B cell (primary cell): ENCODE measurements at regions of chr5 and their contacts with region 1.

Region 1: GRCh38 chr5:128083033-128083810 is at the start of gene SLC12A2:
- DNase-seq: peak; percentile 98
- ATAC-seq: peak; percentile 71
- H3K4me3 ChIP-seq: peak within 1 kb of the TSS; percentile 79 to 89 (median 85)
- H3K4me3 Mint-ChIP-seq: peak within 1 kb of the TSS; percentile 95
- H3K27ac ChIP-seq: peak within 1 kb of the TSS; percentile 85 to 91
- H3K27ac Mint-ChIP-seq: peak within 1 kb of the TSS; percentile 95
- H3K4me1 ChIP-seq: peaks cover 42 to 49% of the 10 kb centered on the region in 2 donors
- H3K4me1 Mint-ChIP-seq: peaks cover 71% of the 10 kb centered on the region
- H3K27me3 ChIP-seq: no peaks in the 10 kb centered on the region
- H3K27me3 Mint-ChIP-seq: no peaks in the 10 kb centered on the region
- CTCF ChIP-seq: no peak
- total RNA-seq, gene SLC12A2: 27.4 and 28.7 TPM in 2 replicates

Region 2: DNA sequence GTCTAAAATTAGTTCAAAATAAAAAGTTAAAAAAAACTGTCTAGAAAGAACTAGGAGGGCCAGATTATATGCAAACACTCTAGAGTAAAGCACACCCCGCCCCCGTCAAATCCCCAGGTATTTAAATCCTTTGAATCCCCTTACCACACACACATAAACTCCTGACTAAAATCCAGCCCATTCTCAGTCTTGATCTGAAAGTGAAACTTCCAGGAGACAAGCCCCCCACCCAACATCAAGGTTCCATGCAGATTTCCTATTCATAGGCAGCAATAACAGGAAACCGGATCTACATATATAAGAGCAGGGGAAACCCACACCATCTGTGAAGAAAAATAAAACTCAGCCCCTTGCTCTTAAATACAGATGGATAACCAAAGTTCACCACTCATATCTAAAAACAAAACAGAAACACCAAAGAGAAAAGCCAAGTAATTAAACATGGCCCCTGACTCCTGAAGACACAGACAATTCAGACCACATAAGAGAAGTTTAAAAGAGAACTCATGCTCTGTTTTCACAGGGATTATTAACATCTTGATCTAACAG is 1095.1 kb before region 1 on chr5:
- CTCF ChIA-PET with region 1: no interaction called
- POLR2A ChIA-PET with region 1: no interaction called
- intact Hi-C with region 1: loop called (anchors 2 kb)
- DNase-seq: peak; percentile 85
- ATAC-seq: peak; percentile 87
- H3K4me3 ChIP-seq: peak overlapping the region; percentile 27 to 52 (median 42)
- H3K4me3 Mint-ChIP-seq: peak overlapping the region; percentile 88
- H3K27ac ChIP-seq: peak overlapping the region; percentile 91 to 94
- H3K27ac Mint-ChIP-seq: peak overlapping the region; percentile 97
- H3K4me1 ChIP-seq: peaks cover 71% of the 10 kb centered on the region in 2 donors
- H3K4me1 Mint-ChIP-seq: peaks cover 80% of the 10 kb centered on the region
- H3K27me3 ChIP-seq: no peaks in the 10 kb centered on the region
- H3K27me3 Mint-ChIP-seq: no peaks in the 10 kb centered on the region
- CTCF ChIP-seq: no peak

Region 3: GRCh38 chr5:127517480-127518318 is 565.5 kb before region 1 on chr5 and contains the start of gene PRRC1:
- CTCF ChIA-PET with region 1: no interaction called
- POLR2A ChIA-PET with region 1: no interaction called
- intact Hi-C with region 1: loop called (anchors 2 kb)
- DNase-seq: peak; percentile 86
- ATAC-seq: peak; percentile 96
- H3K4me3 ChIP-seq: peak within 1 kb of the TSS; percentile 85 to 99 (median 98)
- H3K4me3 Mint-ChIP-seq: peak within 1 kb of the TSS; percentile 93
- H3K27ac ChIP-seq: peak within 1 kb of the TSS; percentile 67 to 85
- H3K27ac Mint-ChIP-seq: peak within 1 kb of the TSS; percentile 79
- H3K4me1 ChIP-seq: peaks cover 12% of the 10 kb centered on the region in 2 donors
- H3K4me1 Mint-ChIP-seq: peaks cover 26% of the 10 kb centered on the region
- H3K27me3 ChIP-seq: no peaks in the 10 kb centered on the region
- H3K27me3 Mint-ChIP-seq: peaks cover 4% of the 10 kb centered on the region
- CTCF ChIP-seq: no peak
- total RNA-seq, gene PRRC1: 33.7 and 35.5 TPM in 2 replicates

Region 4: GRCh38 chr5:127757576-127757975 is 325.6 kb before region 1 on chr5:
- CTCF ChIA-PET with region 1: no interaction called
- POLR2A ChIA-PET with region 1: no interaction called
- intact Hi-C with region 1: no loop called
- DNase-seq: peak; percentile 3
- ATAC-seq: no peak
- H3K4me3 ChIP-seq: no peak overlapping the region
- H3K4me3 Mint-ChIP-seq: no peak overlapping the region
- H3K27ac ChIP-seq: no peak overlapping the region
- H3K27ac Mint-ChIP-seq: no peak overlapping the region
- H3K4me1 ChIP-seq: no peaks in the 10 kb centered on the region
- H3K4me1 Mint-ChIP-seq: no peaks in the 10 kb centered on the region
- H3K27me3 ChIP-seq: no peaks in the 10 kb centered on the region
- H3K27me3 Mint-ChIP-seq: no peaks in the 10 kb centered on the region
- CTCF ChIP-seq: no peak

Region 5: GRCh38 chr5:128154943-128155342 is 71.7 kb after region 1 on chr5:
- CTCF ChIA-PET with region 1: no interaction called
- POLR2A ChIA-PET with region 1: no interaction called
- intact Hi-C with region 1: no loop called
- DNase-seq: no peak
- ATAC-seq: no peak
- H3K4me3 ChIP-seq: no peak overlapping the region
- H3K4me3 Mint-ChIP-seq: no peak overlapping the region
- H3K27ac ChIP-seq: no peak overlapping the region
- H3K27ac Mint-ChIP-seq: no peak overlapping the region
- H3K4me1 ChIP-seq: no peaks in the 10 kb centered on the region
- H3K4me1 Mint-ChIP-seq: no peaks in the 10 kb centered on the region
- H3K27me3 ChIP-seq: no peaks in the 10 kb centered on the region
- H3K27me3 Mint-ChIP-seq: no peaks in the 10 kb centered on the region
- CTCF ChIP-seq: no peak

Region 6: DNA sequence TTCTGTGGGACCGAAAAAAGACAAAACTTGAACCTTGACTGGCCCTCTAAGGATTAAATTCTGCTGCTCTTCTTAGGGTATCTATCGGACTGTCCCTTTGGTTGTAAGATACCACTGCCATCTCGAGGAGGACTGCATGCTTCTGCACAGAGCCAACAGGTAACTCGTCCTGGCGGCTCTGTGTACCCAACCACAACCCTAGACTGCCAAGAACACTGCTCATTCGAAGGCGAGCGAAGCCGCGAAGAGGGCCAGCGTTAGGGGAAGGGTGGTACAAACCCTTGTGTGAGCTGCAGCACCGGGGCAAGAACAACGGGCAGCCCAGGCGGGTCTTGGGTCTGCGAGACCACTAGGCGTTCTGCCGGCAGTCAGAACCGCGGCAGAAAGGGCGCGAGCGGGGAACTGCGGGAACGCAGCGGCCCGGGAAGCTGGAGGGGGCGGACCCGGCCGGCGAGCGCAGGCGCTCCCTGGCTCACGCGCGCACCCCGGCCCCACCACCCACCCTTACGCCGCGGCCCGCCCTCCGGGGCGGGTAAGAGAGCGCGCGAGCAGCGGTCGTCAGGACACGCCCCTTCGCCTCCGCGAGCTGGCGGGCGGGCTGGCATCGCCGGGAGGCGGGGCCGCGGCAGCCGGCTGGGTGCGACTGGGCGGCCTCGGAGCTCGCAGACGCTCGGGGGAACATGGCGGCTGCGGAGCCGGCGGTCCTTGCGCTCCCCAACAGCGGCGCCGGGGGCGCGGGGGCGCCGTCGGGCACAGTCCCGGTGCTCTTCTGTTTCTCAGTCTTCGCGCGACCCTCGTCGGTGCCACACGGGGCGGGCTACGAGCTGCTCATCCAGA is 1011.1 kb after region 1 on chr5 and contains the start of gene ISOC1:
- CTCF ChIA-PET with region 1: no interaction called
- POLR2A ChIA-PET with region 1: no interaction called
- intact Hi-C with region 1: loop called (anchors 5 kb)
- DNase-seq: peak; percentile 93
- ATAC-seq: peak; percentile 92
- H3K4me3 ChIP-seq: peak within 1 kb of the TSS; percentile 71 to 92 (median 82)
- H3K4me3 Mint-ChIP-seq: peak within 1 kb of the TSS; percentile 92
- H3K27ac ChIP-seq: peak within 1 kb of the TSS; percentile 54 to 68
- H3K27ac Mint-ChIP-seq: peak within 1 kb of the TSS; percentile 91
- H3K4me1 ChIP-seq: peaks cover 10 to 13% of the 10 kb centered on the region in 2 donors
- H3K4me1 Mint-ChIP-seq: peaks cover 19% of the 10 kb centered on the region
- H3K27me3 ChIP-seq: peaks cover 0 to 9% (median 4%) of the 10 kb centered on the region in 4 experiments
- H3K27me3 Mint-ChIP-seq: peaks cover 26% of the 10 kb centered on the region
- CTCF ChIP-seq: peak; percentile 35
- total RNA-seq, gene ISOC1: 10.3 and 10.6 TPM in 2 replicates